ENCODE measurements at regions of chr5 and their contacts with region 1.

Region 1: DNA sequence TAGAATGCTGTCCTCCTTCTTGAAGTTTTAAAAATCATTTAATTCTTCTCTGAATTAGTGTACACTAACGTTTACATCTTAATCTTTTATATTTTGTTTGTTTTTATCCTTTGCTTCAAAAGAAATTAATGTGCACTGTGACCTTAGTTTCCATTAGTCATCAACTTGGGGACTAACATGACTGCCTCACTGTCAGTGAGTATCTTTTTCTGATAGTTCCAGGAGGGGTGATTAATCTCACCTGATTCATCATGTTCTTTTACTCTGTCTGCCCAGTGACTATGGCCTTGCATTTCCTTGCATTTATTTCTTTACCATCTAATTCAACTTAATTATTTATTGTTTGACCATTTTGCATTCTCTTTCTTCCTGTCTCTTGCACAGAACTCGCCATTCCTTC is 33.4 kb upstream of the NR3C1 start:
- DNase-seq: no peak

Region 2: DNA sequence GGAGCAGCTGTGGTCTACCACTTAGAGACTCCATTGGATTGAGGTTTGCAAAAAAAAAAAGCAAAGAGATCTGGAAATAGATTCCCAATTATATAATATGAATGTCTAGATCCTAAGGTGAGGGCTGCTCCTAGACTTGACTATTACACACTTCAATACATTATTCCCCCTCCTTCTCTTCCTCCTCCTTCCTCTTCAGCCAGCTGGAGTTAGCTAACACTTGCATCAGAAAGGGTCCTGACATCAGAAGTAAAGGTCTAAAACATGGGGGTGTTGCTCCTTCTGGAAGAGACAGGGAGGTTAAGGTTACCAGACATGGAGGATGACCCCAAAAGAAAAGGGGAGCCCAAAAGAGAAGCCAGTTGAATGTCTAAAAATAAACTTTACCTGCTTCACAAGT is 20.5 kb before region 1 on chr5:
- intact Hi-C with region 1: loop called in 1 of 2 experiments (anchors 1 kb)
- DNase-seq: no peak